ENCODE measurements at regions of chr2 and their contacts with region 1.

Region 1: GRCh38 chr2:157492189-157492773 is 48.4 kb upstream of the CYTIP start:
- DNase-seq: peak; percentile 31 to 95 (median 72)

Region 2: GRCh38 chr2:157302492-157303099 is 189.7 kb before region 1 on chr2:
- intact Hi-C with region 1: loop called (anchors 10 kb)
- DNase-seq: peak in 2 of 10 donors; percentile 21 to 25

Region 3: DNA sequence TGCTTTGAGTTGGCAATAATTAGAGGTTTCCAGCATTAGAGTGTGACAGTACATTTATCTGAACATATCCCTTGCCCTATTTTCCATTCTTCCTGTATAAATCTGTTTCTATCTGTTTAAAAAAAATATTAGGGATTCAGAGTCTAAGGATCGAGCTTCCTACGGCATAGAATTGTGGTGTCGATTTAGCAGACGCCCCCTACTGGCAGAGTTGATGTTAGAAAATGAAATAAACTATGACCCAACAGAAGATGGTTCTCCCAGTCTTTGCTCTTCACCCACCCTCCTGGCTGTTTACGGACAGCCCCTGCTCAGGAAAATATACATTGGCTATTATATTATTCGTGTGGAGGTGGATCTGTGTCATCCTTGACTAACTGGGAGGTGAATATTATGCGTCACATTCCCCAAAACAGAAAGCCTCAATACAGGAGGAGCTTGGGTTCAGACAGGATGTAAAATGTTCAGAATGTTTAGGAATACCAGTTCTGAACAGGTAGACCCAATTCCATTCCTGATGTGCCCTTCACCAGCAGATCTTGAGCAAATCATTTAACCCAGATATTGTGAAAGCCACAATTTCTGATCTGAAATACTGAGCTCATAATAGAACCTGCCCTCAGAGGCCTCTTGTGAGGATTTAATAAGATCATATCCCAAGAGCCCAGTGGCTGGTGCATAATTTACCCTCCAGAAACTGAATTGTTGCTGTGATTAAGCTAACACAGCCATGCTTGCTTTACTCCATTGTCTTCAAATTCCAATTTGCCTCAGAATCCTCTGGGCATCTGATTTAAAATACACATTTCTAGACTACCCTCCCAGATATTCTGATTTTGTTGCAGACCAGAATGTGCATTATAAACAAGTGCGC is 155.9 kb before region 1 on chr2:
- intact Hi-C with region 1: loop called (anchors 10 kb)
- DNase-seq: peak in 1 of 10 donors; percentile 53

Region 4: GRCh38 chr2:157898591-157898996 is 406.3 kb after region 1 on chr2:
- intact Hi-C with region 1: no loop called
- DNase-seq: no peak

Region 5: GRCh38 chr2:158011055-158011771 is 518.9 kb after region 1 on chr2:
- intact Hi-C with region 1: loop called (anchors 5 kb)
- DNase-seq: no peak

Measured in posterior cingulate gyrus (tissue), 11 donors.